ENCODE measurements at regions of chr14 and their contacts with region 1.

Region 1: GRCh38 chr14:85799668-85800067 is 269.7 kb downstream of the FLRT2 start:
- DNase-seq: no peak
- ATAC-seq: no peak
- H3K4me3 ChIP-seq: no peak overlapping the region
- H3K27ac ChIP-seq: no peak overlapping the region
- H3K4me1 ChIP-seq: no peaks in the 10 kb centered on the region
- H3K27me3 ChIP-seq: no peaks in the 10 kb centered on the region
- CTCF ChIP-seq: no peak
- POLR2A ChIP-seq: no peak
- RAD21 ChIP-seq: no peak

Region 2: DNA sequence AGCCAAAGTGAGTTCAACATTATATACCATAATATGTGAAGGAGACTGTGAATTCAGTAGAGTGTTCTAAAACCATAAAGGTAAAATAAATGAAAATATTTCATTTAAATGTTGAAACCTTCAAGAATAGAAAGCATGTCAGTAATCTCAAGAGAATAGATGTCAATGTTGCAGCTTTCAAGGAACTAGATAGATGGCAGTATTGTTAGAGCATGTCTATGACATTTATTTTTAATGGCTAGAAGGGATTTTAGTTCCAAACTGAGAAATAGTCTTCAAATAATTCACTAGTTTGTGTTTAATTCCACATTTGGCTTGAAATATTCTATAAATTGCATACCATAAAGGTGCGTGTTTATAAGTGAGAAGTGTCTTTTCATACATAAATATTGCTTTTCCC is 56.8 kb after region 1 on chr14:
- CTCF ChIA-PET with region 1: no interaction called
- POLR2A ChIA-PET with region 1: no interaction called
- dilution Hi-C with region 1: no loop called
- in situ Hi-C with region 1: no loop called
- intact Hi-C with region 1: loop called (anchors 5 kb)
- DNase-seq: no peak
- ATAC-seq: no peak
- H3K4me3 ChIP-seq: no peak overlapping the region
- H3K27ac ChIP-seq: no peak overlapping the region
- H3K4me1 ChIP-seq: no peaks in the 10 kb centered on the region
- H3K27me3 ChIP-seq: no peaks in the 10 kb centered on the region
- CTCF ChIP-seq: peak; percentile 24; the same call in 1 of the 2 replicates
- POLR2A ChIP-seq: no peak
- RAD21 ChIP-seq: no peak

Region 3: DNA sequence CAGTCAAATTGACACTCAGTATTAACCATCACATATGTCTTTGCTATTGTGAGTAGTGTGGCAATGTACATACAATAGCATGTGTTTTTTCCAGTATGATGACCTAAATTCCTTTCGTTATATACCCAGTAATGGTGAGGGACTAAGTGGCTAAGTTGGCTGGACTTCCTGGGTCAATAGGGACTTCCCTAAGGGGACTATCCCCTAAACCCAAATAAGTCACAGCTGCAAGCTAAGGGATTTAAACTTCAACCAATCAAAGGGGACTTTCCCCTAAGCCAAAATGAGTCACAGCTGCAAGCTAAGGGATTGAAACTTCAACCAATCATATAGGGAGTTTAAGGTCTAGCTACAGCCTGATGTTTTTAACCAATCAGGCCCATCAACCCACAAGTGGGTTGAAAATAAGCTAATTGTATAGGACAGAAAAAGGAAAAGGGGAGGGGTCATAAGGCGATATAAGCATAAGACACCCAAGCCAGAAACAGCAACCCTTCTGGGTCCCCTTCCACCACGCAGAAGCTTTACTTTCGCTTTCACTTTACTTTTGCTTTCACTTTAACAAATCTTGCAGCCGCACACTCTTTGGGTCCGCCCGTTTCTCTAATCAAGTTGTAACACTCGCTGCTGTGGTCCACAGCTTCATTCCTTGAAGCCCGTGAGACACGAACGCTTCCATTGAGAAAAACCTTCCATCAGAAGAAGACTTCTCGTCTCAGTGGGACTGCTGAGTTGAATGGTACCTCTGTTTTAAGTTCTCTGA is 134.6 kb after region 1 on chr14:
- CTCF ChIA-PET with region 1: no interaction called
- POLR2A ChIA-PET with region 1: no interaction called
- dilution Hi-C with region 1: no loop called
- in situ Hi-C with region 1: no loop called
- intact Hi-C with region 1: no loop called
- DNase-seq: no peak
- ATAC-seq: no peak
- H3K4me3 ChIP-seq: peak overlapping the region; percentile 44; the same call in 1 of the 2 replicates
- H3K27ac ChIP-seq: no peak overlapping the region
- H3K4me1 ChIP-seq: no peaks in the 10 kb centered on the region
- H3K27me3 ChIP-seq: no peaks in the 10 kb centered on the region
- CTCF ChIP-seq: no peak
- POLR2A ChIP-seq: no peak
- RAD21 ChIP-seq: no peak